Activated B cell treated with CpG ODN at 0.5 μM for 24 hours (primary cell): ENCODE measurements at regions of chr5 and their contacts with region 1.

Region 1: GRCh38 chr5:159427180-159428012 is 97.1 kb upstream of the IL12B start:
- DNase-seq: no peak
- ATAC-seq: peak; percentile 81
- H3K4me3 Mint-ChIP-seq: peak overlapping the region; percentile 76
- H3K27ac Mint-ChIP-seq: peak overlapping the region; percentile 96
- H3K4me1 Mint-ChIP-seq: peaks cover 64% of the 10 kb centered on the region
- H3K27me3 Mint-ChIP-seq: no peaks in the 10 kb centered on the region
- CTCF ChIP-seq: no peak

Region 2: GRCh38 chr5:159405611-159406031 is 21.8 kb before region 1 on chr5:
- CTCF ChIA-PET with region 1: no interaction called
- POLR2A ChIA-PET with region 1: interaction called, 36 read pairs
- intact Hi-C with region 1: loop called (anchors 1 kb)
- DNase-seq: peak; percentile 35
- ATAC-seq: peak; percentile 86
- H3K4me3 Mint-ChIP-seq: peak overlapping the region; percentile 29
- H3K27ac Mint-ChIP-seq: peak overlapping the region; percentile 74
- H3K4me1 Mint-ChIP-seq: peaks cover 47% of the 10 kb centered on the region
- H3K27me3 Mint-ChIP-seq: no peaks in the 10 kb centered on the region
- CTCF ChIP-seq: no peak

Region 3: DNA sequence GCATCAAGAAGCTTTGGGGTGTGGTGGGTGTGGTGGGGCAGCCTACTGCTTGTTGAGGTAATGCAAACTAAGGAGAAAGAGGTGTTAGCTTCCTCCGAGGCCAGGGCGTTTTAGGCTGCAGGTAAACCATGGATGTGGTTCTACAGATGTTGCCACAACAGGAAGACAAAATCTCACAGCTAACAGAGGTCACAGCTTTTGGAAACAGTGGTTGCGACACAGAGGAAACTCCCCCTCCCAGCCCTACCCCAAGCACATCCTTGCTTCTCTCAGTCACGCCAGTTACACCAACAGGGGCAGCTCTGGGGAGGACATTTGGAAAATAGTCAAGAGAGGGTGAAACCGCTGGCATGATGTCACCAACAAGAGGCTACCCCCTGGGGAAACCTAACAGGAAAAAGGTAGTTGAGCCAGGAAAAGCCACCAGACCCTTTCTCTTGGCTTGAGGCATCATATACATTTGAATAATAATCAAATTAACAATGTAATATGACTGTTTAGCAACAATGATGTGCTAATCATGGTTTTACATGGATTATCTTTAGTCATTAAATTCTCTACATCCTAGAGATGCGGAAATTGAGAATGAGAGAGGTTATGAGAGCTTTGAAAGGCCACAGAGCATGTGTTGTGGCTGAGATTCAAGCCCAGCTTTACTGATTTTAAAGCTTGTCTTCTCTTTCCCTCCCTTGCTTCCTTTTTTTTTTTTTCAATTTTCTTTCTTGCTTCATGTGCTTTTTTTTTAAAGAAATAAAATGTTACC is 14.9 kb before region 1 on chr5:
- CTCF ChIA-PET with region 1: no interaction called
- POLR2A ChIA-PET with region 1: interaction called, 36 read pairs
- intact Hi-C with region 1: loop called (anchors 1 kb)
- DNase-seq: no peak
- ATAC-seq: peak; percentile 72
- H3K4me3 Mint-ChIP-seq: no peak overlapping the region
- H3K27ac Mint-ChIP-seq: peak overlapping the region; percentile 84
- H3K4me1 Mint-ChIP-seq: peaks cover 50% of the 10 kb centered on the region
- H3K27me3 Mint-ChIP-seq: no peaks in the 10 kb centered on the region
- CTCF ChIP-seq: no peak

Region 4: GRCh38 chr5:159478950-159479349 is 51.6 kb after region 1 on chr5:
- CTCF ChIA-PET with region 1: no interaction called
- POLR2A ChIA-PET with region 1: no interaction called
- intact Hi-C with region 1: no loop called
- DNase-seq: no peak
- ATAC-seq: no peak
- H3K4me3 Mint-ChIP-seq: no peak overlapping the region
- H3K27ac Mint-ChIP-seq: no peak overlapping the region
- H3K4me1 Mint-ChIP-seq: peaks cover 11% of the 10 kb centered on the region
- H3K27me3 Mint-ChIP-seq: no peaks in the 10 kb centered on the region
- CTCF ChIP-seq: no peak

Region 5: DNA sequence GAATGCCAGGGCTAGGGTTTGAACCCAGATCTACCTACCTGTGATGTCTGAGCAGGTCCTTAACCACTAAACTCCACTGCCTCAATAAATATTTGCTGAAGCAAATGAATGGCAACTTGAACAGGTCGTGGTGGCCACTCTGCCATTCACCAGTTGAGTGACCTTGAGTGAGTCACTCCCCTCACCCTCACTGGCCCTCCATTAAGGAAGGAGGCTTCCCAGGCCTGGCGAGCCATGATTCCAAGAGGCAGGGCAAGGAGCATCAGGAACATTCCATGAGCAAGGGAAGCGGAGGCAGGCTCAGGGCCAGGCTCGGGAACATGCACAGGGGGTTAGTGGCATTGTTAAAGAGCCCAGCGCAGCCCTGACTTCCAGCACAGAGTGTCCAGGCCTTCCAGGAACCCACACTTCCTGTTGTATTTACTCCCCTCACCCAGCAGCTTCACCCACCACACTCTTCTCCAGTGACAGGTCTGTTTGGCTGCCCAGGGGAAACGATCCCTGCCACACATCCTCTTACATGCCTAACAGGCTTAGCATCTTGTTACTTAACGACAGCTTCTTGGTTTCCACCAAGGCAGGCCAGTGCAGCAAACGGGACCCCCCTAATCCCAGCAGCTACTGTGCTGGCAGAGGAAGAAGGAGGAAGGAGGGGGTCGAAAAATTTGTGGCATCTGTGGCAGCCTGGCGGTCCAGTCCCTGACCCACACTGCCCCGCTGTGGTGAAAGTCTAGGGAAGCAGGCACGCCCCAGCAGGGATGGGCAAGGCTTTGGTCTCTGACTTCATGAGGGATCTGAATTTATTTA is 537.8 kb after region 1 on chr5:
- CTCF ChIA-PET with region 1: no interaction called
- POLR2A ChIA-PET with region 1: no interaction called
- intact Hi-C with region 1: no loop called
- DNase-seq: no peak
- ATAC-seq: no peak
- H3K4me3 Mint-ChIP-seq: no peak overlapping the region
- H3K27ac Mint-ChIP-seq: no peak overlapping the region
- H3K4me1 Mint-ChIP-seq: no peaks in the 10 kb centered on the region
- H3K27me3 Mint-ChIP-seq: peaks cover 42% of the 10 kb centered on the region
- CTCF ChIP-seq: no peak